HEK293 (cell line): ENCODE measurements at regions of chr6 and their contacts with region 1.

Region 1: DNA sequence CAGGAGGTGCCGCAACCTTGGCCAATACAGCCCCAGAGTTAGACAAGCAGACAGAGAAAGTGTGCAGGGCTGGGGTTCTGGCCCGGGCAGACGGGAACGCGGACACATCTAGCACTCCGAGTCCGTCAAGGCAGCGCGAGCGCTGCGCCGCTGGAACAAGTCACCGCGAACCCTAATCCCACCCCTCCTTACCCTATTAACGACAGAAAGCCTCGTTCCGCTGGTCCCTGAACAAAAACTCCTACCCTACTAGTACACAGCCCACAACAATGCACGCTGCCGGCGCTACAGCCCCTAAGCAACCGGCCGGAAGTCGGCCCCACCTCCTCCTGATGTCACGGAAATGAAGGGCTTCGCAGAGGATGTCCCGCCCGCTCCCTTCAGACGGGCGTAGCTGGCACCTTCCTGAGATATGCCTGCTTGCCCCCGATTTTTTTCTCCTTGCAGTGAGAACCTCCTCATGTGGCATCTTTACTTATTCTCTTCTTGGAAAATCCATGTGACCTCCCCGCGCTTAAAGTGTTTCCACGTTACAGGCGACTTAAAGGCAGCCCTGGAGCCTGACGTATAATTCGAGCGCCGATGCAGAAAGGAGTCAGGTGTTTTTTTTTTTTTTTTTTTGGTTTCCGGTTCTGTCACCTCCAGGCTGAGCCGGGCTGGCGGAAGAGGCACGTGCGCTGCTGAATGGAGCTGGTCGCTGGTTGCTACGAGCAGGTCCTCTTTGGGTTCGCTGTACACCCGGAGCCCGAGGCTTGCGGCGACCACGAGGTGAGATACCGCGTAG is at the starts of genes C6orf52 and PAK1IP1:
- H3K4me3 ChIP-seq: peak within 1 kb of the TSS; percentile 92
- H3K27ac ChIP-seq: peak within 1 kb of the TSS; percentile 85
- H3K4me1 ChIP-seq: peaks cover 4% of the 10 kb centered on the region; the same call in 1 of the 2 replicates
- CTCF ChIP-seq: peak; percentile 11

Region 2: GRCh38 chr6:10510592-10511367 is 183.7 kb before region 1 on chr6:
- CTCF ChIA-PET with region 1: interaction called, 3 read pairs
- POLR2A ChIA-PET with region 1: interaction called, 11 read pairs
- H3K4me3 ChIP-seq: no peak overlapping the region
- H3K27ac ChIP-seq: no peak overlapping the region
- H3K4me1 ChIP-seq: peaks cover 6% of the 10 kb centered on the region; the same call in 1 of the 2 replicates
- CTCF ChIP-seq: peak; percentile 88

Region 3: DNA sequence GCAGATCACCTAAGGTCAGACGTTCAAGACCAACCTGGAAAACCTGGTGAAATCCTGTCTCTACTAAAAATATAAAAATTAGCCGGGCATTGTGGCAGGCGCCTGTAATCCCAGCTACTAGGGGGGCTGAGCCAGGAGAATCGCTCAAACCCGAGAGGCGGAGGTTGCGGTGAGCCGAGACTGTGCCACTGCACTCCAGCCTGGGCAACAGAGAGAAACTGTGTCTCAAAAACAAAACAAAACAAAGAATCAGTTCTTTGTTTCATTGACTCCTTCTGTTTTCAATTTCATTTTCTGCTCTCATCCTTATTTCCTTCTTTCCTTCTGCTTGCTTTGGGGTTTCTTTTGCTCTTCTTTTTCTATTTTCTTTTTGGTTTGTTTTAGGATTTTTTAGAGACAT is 19.5 kb after region 1 on chr6:
- CTCF ChIA-PET with region 1: no interaction called
- POLR2A ChIA-PET with region 1: interaction called, 50 read pairs
- H3K4me3 ChIP-seq: no peak overlapping the region
- H3K27ac ChIP-seq: no peak overlapping the region
- H3K4me1 ChIP-seq: no peaks in the 10 kb centered on the region
- CTCF ChIP-seq: no peak

Region 4: GRCh38 chr6:10722820-10723566 is 28.5 kb after region 1 on chr6 and contains the start of gene TMEM14C:
- CTCF ChIA-PET with region 1: interaction called, 3 read pairs
- POLR2A ChIA-PET with region 1: interaction called, 50 read pairs
- H3K4me3 ChIP-seq: peak within 1 kb of the TSS; percentile 64
- H3K27ac ChIP-seq: peak within 1 kb of the TSS; percentile 82
- H3K4me1 ChIP-seq: no peaks in the 10 kb centered on the region
- CTCF ChIP-seq: no peak

Region 5: DNA sequence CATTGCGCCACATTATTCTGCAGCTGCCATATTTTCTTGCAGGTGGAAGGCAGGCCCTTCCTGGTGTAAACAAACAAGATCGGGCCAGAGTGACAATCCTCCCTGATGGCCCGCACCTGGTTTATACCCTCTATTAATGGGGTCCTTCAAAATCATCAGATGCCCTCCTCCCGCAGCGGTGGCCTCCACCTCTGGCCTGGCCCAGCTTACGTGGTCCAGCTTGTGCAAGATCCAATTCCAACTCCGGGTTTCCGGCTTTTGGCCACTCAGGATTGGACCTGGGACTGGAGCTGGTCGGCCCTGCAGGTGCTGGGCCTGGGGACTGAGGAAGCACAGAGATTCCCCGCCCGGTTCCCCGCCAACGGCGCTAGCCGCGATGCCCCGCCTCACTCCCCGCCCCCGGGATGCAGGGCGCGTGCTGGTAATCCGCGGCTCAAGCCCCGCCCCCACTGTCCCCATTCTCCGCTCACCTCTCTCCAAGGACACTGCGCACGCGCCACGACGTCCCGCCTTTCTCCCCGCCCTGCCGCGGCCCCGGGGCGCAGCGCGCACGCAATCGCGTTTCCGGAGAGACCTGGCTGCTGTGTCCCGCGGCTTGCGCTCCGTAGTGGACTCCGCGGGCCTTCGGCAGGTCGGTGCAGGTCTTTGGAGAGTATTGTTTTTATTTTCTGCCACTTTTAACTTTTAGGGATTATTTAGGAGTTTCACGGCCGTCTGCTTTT is 52.9 kb after region 1 on chr6 and contains the start of gene TMEM14B:
- CTCF ChIA-PET with region 1: no interaction called
- POLR2A ChIA-PET with region 1: interaction called, 13 read pairs
- H3K4me3 ChIP-seq: peak within 1 kb of the TSS; percentile 83
- H3K27ac ChIP-seq: peak within 1 kb of the TSS; percentile 67
- H3K4me1 ChIP-seq: peaks cover 7% of the 10 kb centered on the region; the same call in 1 of the 2 replicates
- CTCF ChIP-seq: no peak